Activated CD4-positive, alpha-beta memory T cell treated with anti-CD3 and anti-CD28 coated beads for 36 hours (primary cell): ENCODE measurements at regions of chr2 and their contacts with region 1.

Region 1: GRCh38 chr2:233251306-233252116 is at the start of gene ATG16L1:
- DNase-seq: peak; percentile 98
- H3K4me3 Mint-ChIP-seq: peak within 1 kb of the TSS; percentile 91
- H3K27ac Mint-ChIP-seq: peak within 1 kb of the TSS; percentile 96
- H3K4me1 Mint-ChIP-seq: peaks cover 68% of the 10 kb centered on the region
- H3K27me3 Mint-ChIP-seq: no peaks in the 10 kb centered on the region
- total RNA-seq, gene ATG16L1: 27.0 to 30.5 TPM

Region 2: DNA sequence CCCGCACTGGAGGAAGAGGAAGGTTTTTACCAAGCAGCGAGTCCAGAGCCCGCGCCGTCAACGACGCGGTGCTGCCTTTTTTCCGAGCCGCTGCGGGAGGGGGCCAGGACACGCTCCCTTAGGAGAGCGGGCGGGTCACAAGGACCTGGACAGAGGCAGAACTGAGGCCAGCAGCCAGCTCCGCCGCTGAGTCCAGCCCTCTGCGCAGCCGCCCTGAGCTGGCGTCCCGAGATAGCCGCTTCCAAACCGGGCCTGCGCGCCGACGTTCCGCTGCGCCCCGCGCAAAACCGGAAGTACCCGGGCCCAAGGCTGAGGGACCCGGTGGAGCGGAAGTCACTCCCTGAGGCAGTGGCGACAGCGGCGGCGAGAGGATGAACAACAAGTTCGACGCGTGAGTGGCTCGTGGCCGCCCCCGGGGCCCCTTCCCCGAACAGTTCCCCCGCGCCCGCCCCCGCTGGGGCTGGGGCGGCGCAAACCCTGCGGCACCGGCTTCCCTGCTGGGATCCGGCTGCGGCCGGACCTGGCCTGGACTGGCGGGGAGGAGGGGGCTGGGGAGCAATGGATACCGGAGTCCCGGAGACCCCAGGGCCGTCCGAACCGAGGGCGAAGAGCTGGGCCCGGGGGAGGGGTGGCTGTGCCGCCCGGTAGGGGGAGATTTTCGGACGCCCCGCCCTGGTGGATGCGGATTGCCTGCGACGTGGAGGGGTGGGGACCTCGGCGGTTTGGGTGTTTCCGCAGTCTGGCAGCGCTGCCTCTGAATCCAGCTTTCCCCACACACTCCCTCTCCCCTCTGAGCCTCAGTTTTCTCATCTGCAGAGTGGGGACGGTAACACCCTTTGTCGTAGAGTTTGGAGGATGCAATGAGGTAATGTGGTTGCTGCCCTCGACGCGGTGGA is 700.9 kb before region 1 on chr2 and contains the starts of genes EIF4E2 and TIGD1:
- CTCF ChIA-PET with region 1: no interaction called
- POLR2A ChIA-PET with region 1: no interaction called
- intact Hi-C with region 1: loop called (anchors 5 kb)
- DNase-seq: peak; percentile 95
- H3K4me3 Mint-ChIP-seq: peak within 1 kb of the TSS; percentile 97
- H3K27ac Mint-ChIP-seq: peak within 1 kb of the TSS; percentile 97
- H3K4me1 Mint-ChIP-seq: peaks cover 65% of the 10 kb centered on the region
- H3K27me3 Mint-ChIP-seq: no peaks in the 10 kb centered on the region
- total RNA-seq, gene EIF4E2: 51.7 to 55.7 TPM
- total RNA-seq, gene TIGD1: 5.8 to 7.2 TPM

Region 3: DNA sequence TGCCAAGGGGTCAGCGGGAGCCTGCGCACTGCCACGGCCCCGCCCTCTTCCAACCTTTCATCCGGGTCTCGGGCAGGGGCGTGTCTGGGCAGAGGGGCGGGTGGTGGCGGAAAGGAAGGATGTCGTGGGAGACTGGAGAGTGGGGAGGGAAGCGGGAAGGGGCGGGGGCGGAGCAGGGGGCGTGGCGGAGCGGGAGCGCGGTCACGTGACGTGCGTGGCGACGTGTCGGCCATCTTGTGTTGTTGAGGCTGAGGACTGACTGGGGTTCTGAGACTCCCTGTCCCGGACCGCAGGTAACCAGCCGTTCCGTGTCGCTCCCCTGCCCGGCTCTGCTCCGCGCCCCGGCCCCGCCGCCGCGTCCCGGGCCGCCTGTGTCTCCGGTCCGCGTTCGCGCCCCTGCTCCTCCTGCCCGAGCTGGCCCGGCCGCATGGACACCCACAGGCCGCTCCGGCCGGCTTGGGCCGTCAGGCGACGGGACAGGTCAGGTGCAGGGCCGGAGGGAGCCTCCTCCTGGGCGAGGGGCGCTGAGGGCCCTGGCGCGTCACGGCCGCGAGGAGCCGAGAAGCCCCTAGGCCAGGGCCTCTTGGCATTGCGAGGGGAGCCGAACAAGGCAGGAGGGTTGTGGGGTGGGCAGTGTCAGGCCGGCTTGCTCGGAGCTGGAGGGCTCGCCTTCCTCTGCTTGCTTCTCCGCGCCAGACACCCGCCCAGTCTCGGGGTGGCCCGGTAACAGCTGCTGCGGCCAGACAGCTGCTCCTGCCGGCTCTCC is 554.2 kb before region 1 on chr2 and contains the start of gene GIGYF2:
- CTCF ChIA-PET with region 1: no interaction called
- POLR2A ChIA-PET with region 1: no interaction called
- intact Hi-C with region 1: loop called (anchors 5 kb)
- DNase-seq: peak; percentile 98
- H3K4me3 Mint-ChIP-seq: peak within 1 kb of the TSS; percentile 89
- H3K27ac Mint-ChIP-seq: peak within 1 kb of the TSS; percentile 73
- H3K4me1 Mint-ChIP-seq: peaks cover 34% of the 10 kb centered on the region
- H3K27me3 Mint-ChIP-seq: no peaks in the 10 kb centered on the region
- total RNA-seq, gene GIGYF2: 50.0 to 51.4 TPM

Region 4: GRCh38 chr2:232827316-232827715 is 424.2 kb before region 1 on chr2:
- CTCF ChIA-PET with region 1: no interaction called
- POLR2A ChIA-PET with region 1: no interaction called
- intact Hi-C with region 1: no loop called
- DNase-seq: no peak
- H3K4me3 Mint-ChIP-seq: no peak overlapping the region
- H3K27ac Mint-ChIP-seq: no peak overlapping the region
- H3K4me1 Mint-ChIP-seq: peaks cover 5% of the 10 kb centered on the region
- H3K27me3 Mint-ChIP-seq: no peaks in the 10 kb centered on the region

Region 5: DNA sequence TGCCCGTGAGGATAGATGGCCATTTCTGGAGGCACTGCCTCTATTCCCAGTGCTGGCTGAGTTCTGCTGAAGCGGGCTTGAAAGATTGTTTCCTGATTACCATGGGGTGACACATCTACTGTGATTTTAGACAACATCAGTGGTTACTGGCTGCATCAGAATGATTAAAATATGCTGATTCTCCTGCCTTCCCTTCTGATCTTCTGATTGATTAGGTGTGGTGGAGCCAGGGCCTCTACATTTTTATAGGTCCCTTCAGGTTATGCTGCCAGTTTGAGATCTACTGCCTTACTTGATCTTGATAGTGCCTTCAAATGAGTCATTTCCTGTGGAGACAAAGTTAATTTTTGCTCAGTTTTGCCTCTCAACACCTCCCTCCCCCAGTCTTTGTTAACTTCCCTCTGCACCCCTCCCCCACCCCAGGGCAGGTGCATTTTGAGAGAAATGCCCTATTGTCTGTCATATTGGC is 413.1 kb before region 1 on chr2:
- CTCF ChIA-PET with region 1: no interaction called
- POLR2A ChIA-PET with region 1: no interaction called
- intact Hi-C with region 1: loop called (anchors 5 kb)
- DNase-seq: peak; percentile 77
- H3K4me3 Mint-ChIP-seq: no peak overlapping the region
- H3K27ac Mint-ChIP-seq: peak overlapping the region; percentile 78
- H3K4me1 Mint-ChIP-seq: peaks cover 31% of the 10 kb centered on the region
- H3K27me3 Mint-ChIP-seq: no peaks in the 10 kb centered on the region

Region 6: DNA sequence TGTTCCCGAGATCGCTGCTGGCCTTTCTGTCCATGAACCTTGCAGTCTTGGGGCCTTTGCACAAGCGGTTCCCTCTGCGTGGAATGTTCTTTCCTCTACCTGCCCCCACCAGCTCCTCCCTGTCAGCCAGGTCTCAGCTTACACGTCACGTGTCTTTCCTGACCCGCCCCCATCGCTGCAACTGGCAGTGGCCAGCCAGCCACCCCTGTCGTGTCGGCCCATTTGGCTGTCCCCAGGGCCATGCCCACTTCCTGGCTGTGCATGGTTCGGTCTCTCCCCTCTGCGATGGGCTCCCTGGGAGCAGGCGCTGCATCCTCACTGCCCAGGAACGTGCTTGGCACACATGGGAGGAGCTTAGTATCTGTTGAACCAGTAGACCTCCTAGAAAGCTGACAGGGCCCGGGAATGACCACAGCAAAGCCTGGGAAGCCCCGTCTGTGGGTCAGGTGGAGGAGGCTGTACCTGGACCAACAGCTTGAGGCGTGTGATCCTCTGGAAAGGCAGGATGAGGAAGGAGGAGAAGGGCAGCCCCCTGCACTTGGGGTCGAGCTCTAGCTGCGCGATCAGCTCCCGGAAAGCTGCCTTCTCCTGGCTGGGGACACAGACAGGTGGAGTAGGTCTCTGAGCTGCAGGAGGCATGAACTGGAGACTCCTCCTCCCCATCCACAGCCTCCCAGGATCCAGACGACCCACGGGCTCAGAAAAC is 360.5 kb before region 1 on chr2:
- CTCF ChIA-PET with region 1: no interaction called
- POLR2A ChIA-PET with region 1: no interaction called
- intact Hi-C with region 1: loop called (anchors 10 kb)
- DNase-seq: no peak
- H3K4me3 Mint-ChIP-seq: no peak overlapping the region
- H3K27ac Mint-ChIP-seq: no peak overlapping the region
- H3K4me1 Mint-ChIP-seq: peaks cover 12% of the 10 kb centered on the region
- H3K27me3 Mint-ChIP-seq: peaks cover 20% of the 10 kb centered on the region

Region 7: GRCh38 chr2:233084488-233084887 is 167.0 kb before region 1 on chr2:
- CTCF ChIA-PET with region 1: interaction called, 9 read pairs
- POLR2A ChIA-PET with region 1: interaction called, 3 read pairs
- intact Hi-C with region 1: loop called (anchors 1 kb)
- DNase-seq: peak; percentile 83
- H3K4me3 Mint-ChIP-seq: peak overlapping the region; percentile 70
- H3K27ac Mint-ChIP-seq: peak overlapping the region; percentile 98
- H3K4me1 Mint-ChIP-seq: peaks cover 84% of the 10 kb centered on the region
- H3K27me3 Mint-ChIP-seq: no peaks in the 10 kb centered on the region

Region 8: DNA sequence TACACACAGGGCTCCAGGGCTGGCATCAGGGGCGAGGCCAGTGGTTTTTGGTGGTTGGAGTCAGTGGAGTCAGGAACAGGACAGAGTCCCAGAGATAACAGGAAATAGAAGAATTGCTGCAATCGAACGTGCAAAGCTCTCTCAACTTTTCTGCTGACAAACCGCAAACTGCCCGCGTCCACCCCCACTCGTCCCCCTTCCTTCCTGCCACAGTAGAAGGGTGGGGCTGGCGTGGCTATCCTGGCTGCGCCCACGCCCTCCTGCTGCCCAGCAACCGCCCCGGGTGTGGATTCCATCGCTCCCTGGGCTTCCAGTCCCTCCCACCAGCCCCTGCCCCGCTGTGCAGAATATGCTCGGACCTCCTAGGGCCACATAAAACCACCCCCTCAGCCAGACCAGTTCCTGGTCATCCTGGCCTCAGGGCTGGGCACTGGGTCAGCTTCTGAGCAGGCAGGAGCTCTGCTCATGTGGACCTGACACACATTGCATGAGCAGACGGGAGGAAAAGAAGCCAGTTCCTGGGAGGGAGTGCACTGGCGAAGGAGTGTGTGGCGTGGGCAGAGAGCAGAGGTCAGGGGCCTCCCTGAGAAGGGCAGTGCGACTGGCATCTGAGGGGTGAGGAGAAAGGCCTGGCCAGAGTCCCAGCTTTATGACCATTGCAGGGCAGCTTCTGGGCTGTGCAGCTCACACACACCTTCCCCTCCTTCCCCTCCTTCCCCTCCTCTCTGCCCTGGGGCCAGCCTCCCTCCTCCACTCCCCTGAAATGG is 85.4 kb before region 1 on chr2:
- CTCF ChIA-PET with region 1: no interaction called
- POLR2A ChIA-PET with region 1: no interaction called
- intact Hi-C with region 1: no loop called
- DNase-seq: peak; percentile 73
- H3K4me3 Mint-ChIP-seq: no peak overlapping the region
- H3K27ac Mint-ChIP-seq: no peak overlapping the region
- H3K4me1 Mint-ChIP-seq: no peaks in the 10 kb centered on the region
- H3K27me3 Mint-ChIP-seq: no peaks in the 10 kb centered on the region

Region 9: GRCh38 chr2:233234264-233234663 is 17.2 kb before region 1 on chr2:
- CTCF ChIA-PET with region 1: interaction called, 15 read pairs
- POLR2A ChIA-PET with region 1: interaction called, 3 read pairs
- intact Hi-C with region 1: loop called (anchors 1 kb)
- DNase-seq: peak; percentile 52
- H3K4me3 Mint-ChIP-seq: no peak overlapping the region
- H3K27ac Mint-ChIP-seq: peak overlapping the region; percentile 76
- H3K4me1 Mint-ChIP-seq: peaks cover 47% of the 10 kb centered on the region
- H3K27me3 Mint-ChIP-seq: no peaks in the 10 kb centered on the region